CD4-positive, alpha-beta memory T cell (primary cell): ENCODE measurements at regions of chr1 and their contacts with region 1.

Region 1: GRCh38 chr1:168082008-168082876 is 54.5 kb downstream of the GPR161 start:
- DNase-seq: peak in 4 of 5 donors; percentile 40 to 55 (median 48)
- H3K4me3 ChIP-seq: no peak overlapping the region
- H3K4me3 Mint-ChIP-seq: no peak overlapping the region
- H3K27ac ChIP-seq: no peak overlapping the region
- H3K27ac Mint-ChIP-seq: peak overlapping the region in 2 of 7 donors; percentile 30
- H3K4me1 ChIP-seq: peaks cover 4% of the 10 kb centered on the region
- H3K4me1 Mint-ChIP-seq: peaks cover 0 to 6% (median 3%) of the 10 kb centered on the region in 4 donors
- H3K27me3 ChIP-seq: no peaks in the 10 kb centered on the region
- H3K27me3 Mint-ChIP-seq: no peaks in the 10 kb centered on the region

Region 2: GRCh38 chr1:167803358-167804207 is 278.7 kb before region 1 on chr1:
- CTCF ChIA-PET with region 1: interaction called, 3 read pairs
- POLR2A ChIA-PET with region 1: no interaction called
- intact Hi-C with region 1: loop called (anchors 1 kb)
- DNase-seq: peak; percentile 70 to 81 (median 73)
- H3K4me3 ChIP-seq: no peak overlapping the region
- H3K4me3 Mint-ChIP-seq: peak overlapping the region in 7 of 8 donors; percentile 35 to 70 (median 57)
- H3K27ac ChIP-seq: no peak overlapping the region
- H3K27ac Mint-ChIP-seq: peak overlapping the region in 5 of 7 donors; percentile 6 to 87 (median 62)
- H3K4me1 ChIP-seq: peaks cover 26% of the 10 kb centered on the region
- H3K4me1 Mint-ChIP-seq: peaks cover 23 to 34% (median 26%) of the 10 kb centered on the region in 4 donors
- H3K27me3 ChIP-seq: no peaks in the 10 kb centered on the region
- H3K27me3 Mint-ChIP-seq: peaks cover 2% of the 10 kb centered on the region in 2 donors

Region 3: DNA sequence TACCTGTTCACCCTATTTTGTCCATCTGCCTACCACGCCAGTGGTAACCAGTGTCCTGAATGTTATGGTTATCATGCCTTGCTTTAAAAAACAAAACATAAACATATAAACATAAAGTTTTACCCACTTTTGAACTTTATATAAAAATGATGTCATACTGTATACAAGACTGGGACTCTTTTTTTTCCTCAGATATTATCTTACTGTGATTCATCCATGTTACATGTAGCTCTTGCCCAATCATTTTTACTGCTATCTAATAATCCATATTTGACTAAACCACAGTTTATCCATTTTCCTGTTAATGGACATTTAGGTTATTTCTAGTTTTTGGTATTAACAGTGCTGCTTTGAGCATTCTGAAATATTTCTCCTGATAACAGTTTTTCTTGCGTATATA is 24.3 kb before region 1 on chr1:
- CTCF ChIA-PET with region 1: interaction called, 11 read pairs
- POLR2A ChIA-PET with region 1: no interaction called
- intact Hi-C with region 1: no loop called
- DNase-seq: no peak
- H3K4me3 ChIP-seq: no peak overlapping the region
- H3K4me3 Mint-ChIP-seq: no peak overlapping the region
- H3K27ac ChIP-seq: no peak overlapping the region
- H3K27ac Mint-ChIP-seq: no peak overlapping the region
- H3K4me1 ChIP-seq: peaks cover 7% of the 10 kb centered on the region
- H3K4me1 Mint-ChIP-seq: peaks cover 0 to 4% (median 2%) of the 10 kb centered on the region in 4 donors
- H3K27me3 ChIP-seq: no peaks in the 10 kb centered on the region
- H3K27me3 Mint-ChIP-seq: no peaks in the 10 kb centered on the region

Region 4: GRCh38 chr1:168065506-168065905 is 16.7 kb before region 1 on chr1:
- CTCF ChIA-PET with region 1: interaction called, 30 read pairs
- POLR2A ChIA-PET with region 1: no interaction called
- intact Hi-C with region 1: no loop called
- DNase-seq: no peak
- H3K4me3 ChIP-seq: no peak overlapping the region
- H3K4me3 Mint-ChIP-seq: no peak overlapping the region
- H3K27ac ChIP-seq: no peak overlapping the region
- H3K27ac Mint-ChIP-seq: no peak overlapping the region
- H3K4me1 ChIP-seq: no peaks in the 10 kb centered on the region
- H3K4me1 Mint-ChIP-seq: no peaks in the 10 kb centered on the region
- H3K27me3 ChIP-seq: no peaks in the 10 kb centered on the region
- H3K27me3 Mint-ChIP-seq: no peaks in the 10 kb centered on the region

Region 5: GRCh38 chr1:168092566-168093355 is 10.5 kb after region 1 on chr1:
- CTCF ChIA-PET with region 1: interaction called, 62 read pairs
- POLR2A ChIA-PET with region 1: no interaction called
- intact Hi-C with region 1: no loop called
- DNase-seq: no peak
- H3K4me3 ChIP-seq: no peak overlapping the region
- H3K4me3 Mint-ChIP-seq: no peak overlapping the region
- H3K27ac ChIP-seq: no peak overlapping the region
- H3K27ac Mint-ChIP-seq: no peak overlapping the region
- H3K4me1 ChIP-seq: no peaks in the 10 kb centered on the region
- H3K4me1 Mint-ChIP-seq: no peaks in the 10 kb centered on the region
- H3K27me3 ChIP-seq: no peaks in the 10 kb centered on the region
- H3K27me3 Mint-ChIP-seq: peaks cover 0 to 2% of the 10 kb centered on the region in 2 donors

Region 6: GRCh38 chr1:168102487-168102886 is 20.2 kb after region 1 on chr1:
- CTCF ChIA-PET with region 1: interaction called, 13 read pairs
- POLR2A ChIA-PET with region 1: no interaction called
- intact Hi-C with region 1: no loop called
- DNase-seq: no peak
- H3K4me3 ChIP-seq: no peak overlapping the region
- H3K4me3 Mint-ChIP-seq: no peak overlapping the region
- H3K27ac ChIP-seq: no peak overlapping the region
- H3K27ac Mint-ChIP-seq: peak overlapping the region in 1 of 7 donors; percentile 31
- H3K4me1 ChIP-seq: no peaks in the 10 kb centered on the region
- H3K4me1 Mint-ChIP-seq: peaks cover 0 to 5% (median 0%) of the 10 kb centered on the region in 4 donors
- H3K27me3 ChIP-seq: no peaks in the 10 kb centered on the region
- H3K27me3 Mint-ChIP-seq: peaks cover 2 to 14% of the 10 kb centered on the region in 2 donors

Region 7: GRCh38 chr1:168145184-168146159 is 63.2 kb after region 1 on chr1:
- CTCF ChIA-PET with region 1: interaction called, 5 read pairs
- POLR2A ChIA-PET with region 1: no interaction called
- intact Hi-C with region 1: loop called (anchors 5 kb)
- DNase-seq: peak; percentile 69 to 78 (median 72)
- H3K4me3 ChIP-seq: no peak overlapping the region
- H3K4me3 Mint-ChIP-seq: peak overlapping the region in 1 of 8 donors; percentile 30
- H3K27ac ChIP-seq: no peak overlapping the region
- H3K27ac Mint-ChIP-seq: no peak overlapping the region
- H3K4me1 ChIP-seq: no peaks in the 10 kb centered on the region
- H3K4me1 Mint-ChIP-seq: peaks cover 0 to 13% (median 4%) of the 10 kb centered on the region in 4 donors
- H3K27me3 ChIP-seq: no peaks in the 10 kb centered on the region
- H3K27me3 Mint-ChIP-seq: no peaks in the 10 kb centered on the region